SK-N-SH (cell line): ENCODE measurements at regions of chr9 and their contacts with region 1.

Region 1: DNA sequence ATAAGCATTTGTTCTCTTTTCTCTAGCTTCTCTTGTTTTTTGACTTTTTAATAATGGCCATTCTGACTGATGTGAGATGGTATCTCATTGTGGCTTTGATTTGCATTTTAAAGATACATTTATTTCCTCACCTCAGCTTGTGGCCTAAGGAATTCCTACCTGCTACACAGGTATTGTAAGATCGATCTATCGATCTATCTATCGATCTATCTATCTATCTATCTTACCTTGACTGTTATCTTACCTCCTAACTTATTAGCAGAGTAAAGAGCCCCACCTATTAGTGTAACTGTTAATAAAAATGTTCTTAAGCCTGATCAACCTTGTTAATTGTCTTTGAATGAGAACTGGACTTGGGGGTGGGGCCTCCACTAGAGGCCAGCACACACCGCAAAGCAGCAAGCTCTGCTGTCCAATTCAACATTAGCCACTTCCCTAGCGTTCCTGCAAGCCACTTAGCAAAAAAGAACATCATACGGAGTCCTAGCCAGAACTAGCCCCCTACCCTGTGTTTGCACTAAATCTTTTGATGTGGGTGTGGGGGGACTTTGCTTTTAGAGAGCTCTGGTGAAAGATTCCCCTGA is 515.7 kb downstream of the KDM4C start:
- DNase-seq: no peak
- H3K4me3 ChIP-seq: no peak overlapping the region
- H3K27ac ChIP-seq: no peak overlapping the region
- H3K4me1 ChIP-seq: no peaks in the 10 kb centered on the region
- H3K27me3 ChIP-seq: no peaks in the 10 kb centered on the region
- CTCF ChIP-seq: peak; percentile 39; the same call in 1 of the 2 replicates
- EP300 ChIP-seq: no peak
- RAD21 ChIP-seq: peak; percentile 64

Region 2: GRCh38 chr9:7259544-7260241 is 13.8 kb before region 1 on chr9:
- CTCF ChIA-PET with region 1: interaction called, 10 read pairs
- POLR2A ChIA-PET with region 1: no interaction called
- DNase-seq: peak; percentile 11
- H3K4me3 ChIP-seq: no peak overlapping the region
- H3K27ac ChIP-seq: no peak overlapping the region
- H3K4me1 ChIP-seq: no peaks in the 10 kb centered on the region; a peak in 1 of 4 replicates
- H3K27me3 ChIP-seq: no peaks in the 10 kb centered on the region
- CTCF ChIP-seq: no peak; the same call in 1 of the 2 replicates
- EP300 ChIP-seq: no peak
- RAD21 ChIP-seq: peak; percentile 49